Panc1 (cell line): ENCODE measurements at regions of chr1 and their contacts with region 1.

Region 1: DNA sequence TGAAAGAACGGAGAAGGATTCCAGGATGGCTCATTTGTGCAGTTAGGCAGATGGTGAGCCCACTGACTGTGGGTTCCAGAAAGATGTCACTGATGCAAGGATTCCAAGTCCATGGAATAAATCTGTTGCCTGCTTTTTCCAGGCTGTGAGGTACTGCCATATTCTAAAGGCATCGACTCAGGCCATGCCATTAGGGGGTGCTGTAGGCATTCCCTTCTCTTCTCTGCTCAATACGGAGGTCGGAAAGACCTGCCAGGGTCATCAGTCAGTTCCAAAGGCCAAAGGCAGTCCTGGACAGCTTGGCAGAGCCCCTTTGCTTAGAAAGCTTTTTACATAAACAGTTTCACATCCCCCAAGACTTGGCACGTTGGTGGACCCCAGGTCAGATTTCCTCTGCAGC is 31.7 kb upstream of the TMEM125 start:
- DNase-seq: peak; percentile 43
- ATAC-seq: peak; percentile 94
- H3K4me3 ChIP-seq: no peak overlapping the region
- H3K27ac ChIP-seq: no peak overlapping the region
- H3K4me1 ChIP-seq: no peaks in the 10 kb centered on the region
- H3K27me3 ChIP-seq: no peaks in the 10 kb centered on the region
- CTCF ChIP-seq: peak; percentile 83

Region 2: GRCh38 chr1:43121256-43121900 is 116.7 kb before region 1 on chr1:
- CTCF ChIA-PET with region 1: no interaction called
- POLR2A ChIA-PET with region 1: no interaction called
- in situ Hi-C with region 1: no loop called
- intact Hi-C with region 1: no loop called
- DNase-seq: no peak
- ATAC-seq: no peak
- H3K4me3 ChIP-seq: no peak overlapping the region
- H3K27ac ChIP-seq: no peak overlapping the region
- H3K4me1 ChIP-seq: no peaks in the 10 kb centered on the region
- H3K27me3 ChIP-seq: no peaks in the 10 kb centered on the region
- CTCF ChIP-seq: no peak

Region 3: DNA sequence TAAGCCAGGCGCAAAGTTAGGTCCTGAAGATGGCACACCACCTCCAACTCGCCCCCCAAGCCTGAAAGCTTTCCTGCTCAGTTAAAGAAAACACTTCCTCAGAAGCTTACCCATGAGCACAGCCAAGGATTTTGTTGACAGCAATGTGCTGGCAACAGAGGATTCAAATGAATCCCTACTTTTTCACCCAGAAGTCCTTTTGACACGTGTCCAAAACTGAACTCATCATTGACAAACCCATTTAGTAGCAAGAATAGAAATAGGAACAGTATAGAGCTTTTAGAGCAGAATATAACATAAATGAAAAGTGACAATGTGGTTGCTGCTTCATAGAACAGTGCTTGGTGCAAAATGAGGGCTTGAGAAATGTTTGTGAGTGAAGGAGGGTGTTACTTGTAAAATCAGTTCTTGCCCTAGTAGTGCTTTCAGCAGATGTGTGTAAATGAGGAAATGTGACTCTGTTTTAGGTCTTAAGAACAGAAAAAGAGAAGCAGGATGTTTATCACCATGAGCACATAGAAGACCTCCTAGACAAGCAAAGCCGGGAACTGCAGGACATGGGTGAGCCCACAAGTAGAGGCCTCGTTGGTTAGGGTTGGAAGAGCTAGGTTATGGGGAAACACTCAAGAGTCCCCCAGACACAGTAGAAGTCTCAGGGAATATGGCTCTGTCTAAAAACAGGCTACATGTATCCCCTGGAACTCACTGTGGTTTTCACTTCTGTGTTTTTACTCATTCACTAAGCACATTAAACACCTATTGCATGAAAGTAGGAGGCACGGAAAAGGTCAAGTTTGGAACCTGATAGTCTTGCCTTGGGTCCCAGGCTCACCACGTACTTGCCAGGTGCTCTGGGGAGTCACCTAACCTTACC is 16.9 kb before region 1 on chr1:
- CTCF ChIA-PET with region 1: no interaction called
- POLR2A ChIA-PET with region 1: no interaction called
- in situ Hi-C with region 1: no loop called
- intact Hi-C with region 1: no loop called
- DNase-seq: no peak
- ATAC-seq: no peak
- H3K4me3 ChIP-seq: no peak overlapping the region
- H3K27ac ChIP-seq: no peak overlapping the region
- H3K4me1 ChIP-seq: no peaks in the 10 kb centered on the region
- H3K27me3 ChIP-seq: no peaks in the 10 kb centered on the region
- CTCF ChIP-seq: no peak

Region 4: GRCh38 chr1:43256675-43257570 is 18.8 kb after region 1 on chr1:
- CTCF ChIA-PET with region 1: interaction called, 11 read pairs
- POLR2A ChIA-PET with region 1: no interaction called
- in situ Hi-C with region 1: no loop called
- intact Hi-C with region 1: no loop called
- DNase-seq: no peak
- ATAC-seq: no peak
- H3K4me3 ChIP-seq: no peak overlapping the region
- H3K27ac ChIP-seq: no peak overlapping the region
- H3K4me1 ChIP-seq: no peaks in the 10 kb centered on the region
- H3K27me3 ChIP-seq: no peaks in the 10 kb centered on the region
- CTCF ChIP-seq: no peak

Region 5: GRCh38 chr1:43358746-43359693 is 120.9 kb after region 1 on chr1 and contains the start of gene CDC20:
- CTCF ChIA-PET with region 1: no interaction called
- POLR2A ChIA-PET with region 1: no interaction called
- in situ Hi-C with region 1: no loop called
- intact Hi-C with region 1: loop called (anchors 5 kb)
- DNase-seq: peak; percentile 93
- ATAC-seq: peak; percentile 95
- H3K4me3 ChIP-seq: peak within 1 kb of the TSS; percentile 90 to 95
- H3K27ac ChIP-seq: peak within 1 kb of the TSS; percentile 100
- H3K4me1 ChIP-seq: peaks cover 28% of the 10 kb centered on the region
- H3K27me3 ChIP-seq: no peaks in the 10 kb centered on the region
- CTCF ChIP-seq: no peak
- total RNA-seq, gene CDC20: 215 TPM

Region 6: DNA sequence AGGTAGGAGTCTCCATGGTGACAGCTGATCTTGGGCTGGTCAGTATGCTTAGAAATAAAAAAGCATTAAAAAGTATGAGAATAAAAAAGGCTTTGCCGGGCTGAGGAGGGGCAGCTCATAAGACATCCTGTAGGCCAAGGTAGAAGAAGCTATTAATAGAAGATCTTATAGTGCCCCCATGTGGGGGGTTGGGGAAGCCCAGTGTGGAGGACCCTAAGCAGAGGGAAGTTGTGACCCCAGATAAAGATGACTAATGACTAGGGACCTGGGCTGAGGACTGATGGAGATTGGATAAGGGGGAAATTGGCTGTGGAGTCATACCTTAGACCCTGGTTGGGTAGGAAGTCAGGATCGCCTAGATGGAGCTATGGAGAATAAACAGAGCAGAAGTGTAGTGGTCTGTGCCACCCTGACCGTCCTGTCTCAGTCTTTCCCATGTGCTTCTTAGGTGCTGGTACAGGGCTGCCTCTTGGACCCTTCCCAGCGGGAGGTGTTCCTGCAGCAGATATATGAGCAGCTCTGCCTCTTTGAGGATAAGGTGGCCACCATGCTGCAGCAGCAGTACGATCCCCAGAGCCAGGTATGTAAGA is 176.6 kb after region 1 on chr1:
- CTCF ChIA-PET with region 1: interaction called, 4 read pairs
- POLR2A ChIA-PET with region 1: no interaction called
- in situ Hi-C with region 1: no loop called
- intact Hi-C with region 1: loop called (anchors 1 kb)
- DNase-seq: peak; percentile 20
- ATAC-seq: peak; percentile 93
- H3K4me3 ChIP-seq: no peak overlapping the region
- H3K27ac ChIP-seq: no peak overlapping the region
- H3K4me1 ChIP-seq: no peaks in the 10 kb centered on the region
- H3K27me3 ChIP-seq: no peaks in the 10 kb centered on the region
- CTCF ChIP-seq: peak; percentile 76